ENCODE measurements at regions of chrX and their contacts with region 1.

Region 1: GRCh38 chrX:23901805-23902204 is 5.9 kb downstream of the APOO start:
- DNase-seq: peak; percentile 72
- H3K4me3 ChIP-seq: no peak overlapping the region
- H3K27ac ChIP-seq: peak overlapping the region; percentile 87
- H3K4me1 ChIP-seq: peaks cover 44% of the 10 kb centered on the region
- H3K27me3 ChIP-seq: no peaks in the 10 kb centered on the region
- CTCF ChIP-seq: peak; percentile 55 to 77

Region 2: GRCh38 chrX:22748093-22748999 is 1153.5 kb before region 1 on chrX:
- CTCF ChIA-PET with region 1: no interaction called
- dilution Hi-C with region 1: no loop called
- in situ Hi-C with region 1: no loop called
- intact Hi-C with region 1: loop called (anchors 5 kb)
- DNase-seq: peak; percentile 25
- H3K4me3 ChIP-seq: no peak overlapping the region
- H3K27ac ChIP-seq: no peak overlapping the region
- H3K4me1 ChIP-seq: no peaks in the 10 kb centered on the region
- H3K27me3 ChIP-seq: peaks cover 4% of the 10 kb centered on the region
- CTCF ChIP-seq: peak; percentile 73 to 84

Region 3: GRCh38 chrX:23616361-23616760 is 285.4 kb before region 1 on chrX:
- CTCF ChIA-PET with region 1: no interaction called
- dilution Hi-C with region 1: no loop called
- in situ Hi-C with region 1: no loop called
- intact Hi-C with region 1: loop called (anchors 2 kb)
- DNase-seq: peak; percentile 4
- H3K4me3 ChIP-seq: no peak overlapping the region
- H3K27ac ChIP-seq: no peak overlapping the region
- H3K4me1 ChIP-seq: no peaks in the 10 kb centered on the region
- H3K27me3 ChIP-seq: peaks cover 3% of the 10 kb centered on the region
- CTCF ChIP-seq: peak; percentile 48 to 74

Region 4: DNA sequence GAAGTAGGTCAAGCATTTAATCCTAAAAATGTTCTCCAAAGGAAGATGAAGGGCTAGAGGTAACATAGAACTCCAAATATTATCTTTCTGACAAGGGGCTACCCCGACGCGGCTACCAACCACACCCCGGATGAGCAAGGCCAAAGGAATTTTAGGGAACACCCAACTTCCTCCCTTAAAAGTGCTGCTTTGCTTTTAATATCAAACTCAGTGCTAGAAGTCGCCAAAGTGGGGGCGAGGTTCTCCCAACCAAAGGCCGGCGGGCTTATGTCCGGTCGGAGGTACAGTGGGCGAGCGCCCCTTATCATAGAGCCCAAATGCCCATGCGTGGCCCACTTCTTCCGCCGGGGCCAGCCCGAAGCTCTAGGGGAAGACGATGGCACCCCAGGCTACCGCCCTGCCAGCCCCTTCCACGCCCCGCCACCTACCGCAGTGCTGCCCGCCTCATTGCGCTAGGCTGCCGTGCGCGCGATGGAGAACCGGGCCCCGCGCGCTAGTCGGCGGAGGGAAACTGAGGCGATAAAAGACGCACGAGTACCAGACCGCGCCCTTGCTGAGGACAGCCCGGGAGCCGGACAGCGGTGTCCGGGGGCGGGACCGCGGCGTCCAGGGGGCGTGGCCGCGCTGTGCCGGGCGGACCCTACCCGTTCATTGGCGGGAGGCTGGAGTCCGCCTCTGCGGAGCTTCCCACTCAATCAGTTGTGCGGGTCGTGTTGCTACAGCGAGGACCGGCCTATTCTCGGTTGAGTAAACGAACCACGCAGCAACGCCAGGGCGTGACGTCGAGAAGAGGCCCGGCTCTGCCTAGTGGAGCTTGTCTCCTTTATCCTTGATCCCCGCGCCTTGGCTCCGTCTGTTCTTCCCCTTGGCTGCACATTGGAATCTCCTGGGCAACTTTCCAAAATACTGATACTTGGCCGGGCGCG is 158.8 kb before region 1 on chrX and contains the start of gene ACOT9:
- CTCF ChIA-PET with region 1: interaction called, 4 read pairs
- dilution Hi-C with region 1: no loop called
- in situ Hi-C with region 1: no loop called
- intact Hi-C with region 1: loop called (anchors 1 kb)
- DNase-seq: peak; percentile 81
- H3K4me3 ChIP-seq: peak within 1 kb of the TSS; percentile 56 to 88 (median 72)
- H3K27ac ChIP-seq: peak within 1 kb of the TSS; percentile 94
- H3K4me1 ChIP-seq: no peaks in the 10 kb centered on the region
- H3K27me3 ChIP-seq: no peaks in the 10 kb centered on the region
- CTCF ChIP-seq: no peak
- total RNA-seq, gene ACOT9: 57.8 to 74.1 TPM

Region 5: GRCh38 chrX:23782863-23783568 is 118.8 kb before region 1 on chrX and contains the start of gene SAT1:
- CTCF ChIA-PET with region 1: interaction called, 6 read pairs
- dilution Hi-C with region 1: no loop called
- in situ Hi-C with region 1: loop called in 1 of 2 experiments (anchors 5 kb)
- intact Hi-C with region 1: loop called (anchors 1 kb)
- DNase-seq: peak; percentile 92
- H3K4me3 ChIP-seq: peak within 1 kb of the TSS; percentile 49 to 73 (median 71)
- H3K27ac ChIP-seq: peak within 1 kb of the TSS; percentile 92
- H3K4me1 ChIP-seq: peaks cover 27% of the 10 kb centered on the region
- H3K27me3 ChIP-seq: no peaks in the 10 kb centered on the region
- CTCF ChIP-seq: peak; percentile 40 to 75
- total RNA-seq, gene SAT1: 453 to 593 TPM

Measured in mammary epithelial cell (primary cell).